Endothelial cell of umbilical vein (primary cell): ENCODE measurements at regions of chr12 and their contacts with region 1.

Region 1: DNA sequence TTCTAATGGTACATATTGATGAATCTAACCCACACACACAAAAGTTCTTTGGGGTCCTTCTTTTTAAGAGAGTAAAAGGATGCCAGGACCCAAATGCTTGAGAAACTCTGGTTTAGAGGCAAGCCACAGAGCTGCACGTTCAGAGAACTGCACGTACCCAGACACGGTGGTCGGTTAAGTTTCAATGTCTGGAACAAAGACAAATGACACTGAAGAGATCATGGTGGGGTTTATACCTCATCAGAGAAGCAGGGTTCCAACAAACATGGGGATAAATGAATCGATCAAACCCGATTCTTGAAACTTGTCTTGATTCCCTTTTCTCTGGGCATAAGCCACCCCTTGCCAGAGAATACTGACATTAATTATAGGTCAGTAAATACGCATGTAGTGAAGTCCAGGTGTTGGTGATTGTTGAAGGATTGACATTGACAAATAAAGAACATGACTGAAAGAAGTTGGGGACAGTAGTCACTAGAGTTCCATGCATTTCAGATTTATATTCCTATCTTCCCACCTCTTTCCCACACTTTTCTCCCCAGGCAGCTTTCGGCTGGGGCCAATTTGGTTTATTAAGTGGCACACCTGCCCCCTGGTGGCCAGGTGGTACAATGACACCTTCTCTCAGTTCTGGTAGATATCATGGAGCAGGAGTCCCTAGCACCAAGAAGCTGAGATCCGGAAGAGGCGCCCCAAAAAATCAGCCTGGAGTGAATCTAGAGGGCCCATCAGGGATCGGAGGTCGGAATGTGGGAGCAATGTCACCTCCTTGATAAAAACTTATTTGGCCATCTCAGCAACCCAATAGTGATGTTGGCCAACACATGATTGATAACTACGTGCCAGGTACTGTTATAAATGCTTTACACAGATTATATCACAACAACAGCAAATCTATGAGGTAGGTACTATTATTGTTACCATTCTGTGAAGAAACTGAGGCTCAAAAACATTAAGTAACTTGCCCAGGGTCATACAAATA is 17.8 kb upstream of the HDAC7 start:
- DNase-seq: peak; percentile 70
- H3K4me3 ChIP-seq: no peak overlapping the region
- H3K27ac ChIP-seq: no peak overlapping the region
- H3K4me1 ChIP-seq: no peaks in the 10 kb centered on the region
- H3K27me3 ChIP-seq: no peaks in the 10 kb centered on the region
- CTCF ChIP-seq: peak; percentile 75 to 80
- POLR2A ChIP-seq: no peak

Region 2: GRCh38 chr12:47715393-47715876 is 122.0 kb before region 1 on chr12:
- CTCF ChIA-PET with region 1: interaction called, 172 read pairs
- POLR2A ChIA-PET with region 1: no interaction called
- dilution Hi-C with region 1: no loop called
- intact Hi-C with region 1: loop called (anchors 1 kb)
- DNase-seq: peak; percentile 70
- H3K4me3 ChIP-seq: no peak overlapping the region
- H3K27ac ChIP-seq: no peak overlapping the region
- H3K4me1 ChIP-seq: peaks cover 7% of the 10 kb centered on the region
- H3K27me3 ChIP-seq: no peaks in the 10 kb centered on the region
- CTCF ChIP-seq: peak; percentile 63 to 78
- POLR2A ChIP-seq: no peak

Region 3: GRCh38 chr12:47742253-47742825 is 95.1 kb before region 1 on chr12:
- CTCF ChIA-PET with region 1: interaction called, 136 read pairs
- POLR2A ChIA-PET with region 1: interaction called, 3 read pairs
- dilution Hi-C with region 1: no loop called
- intact Hi-C with region 1: loop called (anchors 1 kb)
- DNase-seq: peak; percentile 51
- H3K4me3 ChIP-seq: no peak overlapping the region
- H3K27ac ChIP-seq: no peak overlapping the region
- H3K4me1 ChIP-seq: peaks cover 11% of the 10 kb centered on the region
- H3K27me3 ChIP-seq: no peaks in the 10 kb centered on the region
- CTCF ChIP-seq: peak; percentile 89 to 94
- POLR2A ChIP-seq: no peak

Region 4: DNA sequence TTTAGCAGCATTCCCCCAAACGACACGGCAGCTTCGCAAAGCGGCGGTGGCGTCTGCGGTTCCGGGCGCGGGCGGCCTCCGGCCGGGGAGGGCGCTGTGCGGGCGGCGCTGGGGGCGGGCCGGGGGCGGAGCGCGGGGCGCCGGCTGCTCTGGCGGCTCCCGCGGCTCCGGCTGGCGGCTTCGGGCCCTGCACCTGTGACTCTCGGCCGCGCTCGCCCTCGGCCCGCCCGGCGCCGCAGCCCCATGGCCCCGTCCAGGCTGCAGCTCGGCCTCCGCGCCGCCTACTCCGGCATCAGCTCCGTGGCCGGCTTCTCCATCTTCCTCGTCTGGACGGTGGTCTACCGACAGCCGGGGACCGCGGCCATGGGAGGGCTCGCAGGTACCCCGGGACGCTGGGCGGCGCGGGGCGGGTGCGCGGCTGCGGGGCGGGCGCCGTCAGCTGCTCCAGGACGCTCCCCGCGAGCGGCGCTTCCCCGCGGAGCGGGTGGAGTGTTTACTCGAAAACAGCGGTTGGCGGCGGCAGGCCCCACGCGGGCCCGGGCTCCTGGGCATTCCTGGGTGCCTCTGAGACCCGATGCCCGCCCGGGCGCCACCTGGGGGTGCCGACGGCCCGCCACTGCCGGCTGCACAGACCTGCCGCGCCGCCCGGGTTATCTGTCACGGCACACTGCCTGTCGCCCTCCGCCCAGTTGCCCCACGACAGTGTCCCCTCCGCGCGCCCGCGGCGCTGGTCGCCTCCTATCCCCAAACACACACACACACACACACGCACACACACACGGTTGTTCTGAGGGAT is 64.2 kb before region 1 on chr12 and contains the start of gene SLC48A1:
- CTCF ChIA-PET with region 1: interaction called, 244 read pairs
- POLR2A ChIA-PET with region 1: no interaction called
- dilution Hi-C with region 1: no loop called
- intact Hi-C with region 1: no loop called
- DNase-seq: peak; percentile 54
- H3K4me3 ChIP-seq: peak within 1 kb of the TSS; percentile 43 to 70 (median 57)
- H3K27ac ChIP-seq: no peak within 1 kb of the TSS
- H3K4me1 ChIP-seq: peaks cover 34% of the 10 kb centered on the region
- H3K27me3 ChIP-seq: no peaks in the 10 kb centered on the region
- CTCF ChIP-seq: peak; percentile 13 to 38
- POLR2A ChIP-seq: peak; percentile 53
- total RNA-seq, gene SLC48A1: 17.9 and 20.3 TPM in 2 replicates

Region 5: DNA sequence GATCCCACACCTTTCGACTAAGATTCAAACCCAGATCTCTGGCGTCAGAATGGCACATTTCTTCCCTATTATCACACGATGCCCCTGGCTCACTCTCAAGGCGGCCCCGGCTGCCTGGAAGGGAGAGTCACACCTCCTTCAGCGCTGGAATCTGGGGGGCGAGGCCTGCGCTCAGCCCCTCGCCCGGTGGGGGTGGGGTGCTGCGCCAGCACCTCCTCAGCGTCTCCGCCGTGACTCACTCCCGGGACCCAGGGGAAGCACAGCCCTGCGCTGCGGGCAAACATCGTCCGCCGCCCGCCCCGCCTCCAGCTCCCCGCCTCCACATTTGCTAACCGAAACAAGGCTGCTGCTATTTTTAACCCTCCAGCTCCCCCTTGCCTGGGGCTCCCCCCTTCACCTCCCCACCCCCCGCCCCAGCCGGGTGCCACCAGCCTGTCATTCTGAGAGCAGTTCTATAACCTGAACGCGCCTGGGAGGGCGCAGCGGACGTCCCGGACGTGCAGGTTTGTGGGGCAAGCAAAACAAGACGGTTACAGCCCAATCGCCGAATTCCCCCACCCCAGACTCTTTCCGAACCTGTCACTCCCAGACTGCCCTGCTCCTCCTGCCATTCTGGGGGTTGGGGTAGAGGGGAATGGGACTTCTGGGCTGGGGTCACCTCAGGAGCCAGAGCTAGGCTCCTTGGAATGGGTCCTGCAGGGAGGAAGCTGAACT is 24.5 kb before region 1 on chr12:
- CTCF ChIA-PET with region 1: interaction called, 246 read pairs
- POLR2A ChIA-PET with region 1: interaction called, 4 read pairs
- dilution Hi-C with region 1: no loop called
- intact Hi-C with region 1: no loop called
- DNase-seq: peak; percentile 87
- H3K4me3 ChIP-seq: peak overlapping the region in 2 of 3 experiments; percentile 11 to 16
- H3K27ac ChIP-seq: peak overlapping the region; percentile 93
- H3K4me1 ChIP-seq: peaks cover 92% of the 10 kb centered on the region
- H3K27me3 ChIP-seq: no peaks in the 10 kb centered on the region
- CTCF ChIP-seq: no peak
- POLR2A ChIP-seq: no peak

Region 6: DNA sequence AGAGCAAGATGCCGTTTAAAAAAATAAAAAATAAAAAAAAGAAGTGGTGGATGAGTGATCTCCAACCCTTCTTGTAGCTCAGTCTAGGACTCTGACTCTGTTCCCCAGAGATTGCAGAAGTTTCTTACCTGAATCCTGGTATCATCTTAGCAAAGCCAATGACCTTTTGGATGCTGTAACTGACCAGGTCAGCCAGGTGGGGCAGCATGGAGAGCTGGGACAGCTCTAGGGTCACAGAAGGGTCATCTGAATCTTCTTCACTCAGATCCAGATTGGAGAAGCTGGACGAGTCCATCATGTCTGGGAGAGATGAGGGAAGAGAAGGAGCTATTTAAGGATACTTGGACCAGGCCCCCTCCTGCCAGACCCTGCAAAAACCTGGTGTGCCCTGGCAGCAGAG is 18.0 kb after region 1 on chr12:
- CTCF ChIA-PET with region 1: interaction called, 15 read pairs
- POLR2A ChIA-PET with region 1: no interaction called
- dilution Hi-C with region 1: no loop called
- intact Hi-C with region 1: no loop called
- DNase-seq: no peak
- H3K4me3 ChIP-seq: no peak overlapping the region
- H3K27ac ChIP-seq: no peak overlapping the region
- H3K4me1 ChIP-seq: no peaks in the 10 kb centered on the region
- H3K27me3 ChIP-seq: no peaks in the 10 kb centered on the region
- CTCF ChIP-seq: no peak
- POLR2A ChIP-seq: no peak

Region 7: GRCh38 chr12:47870175-47870781 is 32.8 kb after region 1 on chr12:
- CTCF ChIA-PET with region 1: no interaction called
- POLR2A ChIA-PET with region 1: no interaction called
- dilution Hi-C with region 1: no loop called
- intact Hi-C with region 1: no loop called
- DNase-seq: no peak
- H3K4me3 ChIP-seq: no peak overlapping the region
- H3K27ac ChIP-seq: no peak overlapping the region
- H3K4me1 ChIP-seq: peaks cover 6% of the 10 kb centered on the region
- H3K27me3 ChIP-seq: no peaks in the 10 kb centered on the region
- CTCF ChIP-seq: peak; percentile 11 to 41
- POLR2A ChIP-seq: no peak

Region 8: GRCh38 chr12:48165094-48165981 is 327.9 kb after region 1 on chr12:
- CTCF ChIA-PET with region 1: interaction called, 3 read pairs
- POLR2A ChIA-PET with region 1: no interaction called
- dilution Hi-C with region 1: no loop called
- intact Hi-C with region 1: loop called (anchors 1 kb)
- DNase-seq: peak; percentile 67
- H3K4me3 ChIP-seq: no peak overlapping the region
- H3K27ac ChIP-seq: no peak overlapping the region
- H3K4me1 ChIP-seq: no peaks in the 10 kb centered on the region
- H3K27me3 ChIP-seq: peaks cover 10 to 23% of the 10 kb centered on the region in 2 experiments
- CTCF ChIP-seq: peak; percentile 62 to 80
- POLR2A ChIP-seq: no peak